Activated T-helper 1 cell treated with anti-CD3 and anti-CD28 coated beads, Interleukin-12 subunit alpha, Interleukin-12 subunit beta, Interleukin-2, Interleukin-4 antibody, amounts not matched to agents 30 ng/mL and 10 ng/mL and 1 ng/mL, durations not matched to agents 14 hours and 24 hours and 36 hours (primary cell): ENCODE measurements at regions of chrX and their contacts with region 1.

Region 1: DNA sequence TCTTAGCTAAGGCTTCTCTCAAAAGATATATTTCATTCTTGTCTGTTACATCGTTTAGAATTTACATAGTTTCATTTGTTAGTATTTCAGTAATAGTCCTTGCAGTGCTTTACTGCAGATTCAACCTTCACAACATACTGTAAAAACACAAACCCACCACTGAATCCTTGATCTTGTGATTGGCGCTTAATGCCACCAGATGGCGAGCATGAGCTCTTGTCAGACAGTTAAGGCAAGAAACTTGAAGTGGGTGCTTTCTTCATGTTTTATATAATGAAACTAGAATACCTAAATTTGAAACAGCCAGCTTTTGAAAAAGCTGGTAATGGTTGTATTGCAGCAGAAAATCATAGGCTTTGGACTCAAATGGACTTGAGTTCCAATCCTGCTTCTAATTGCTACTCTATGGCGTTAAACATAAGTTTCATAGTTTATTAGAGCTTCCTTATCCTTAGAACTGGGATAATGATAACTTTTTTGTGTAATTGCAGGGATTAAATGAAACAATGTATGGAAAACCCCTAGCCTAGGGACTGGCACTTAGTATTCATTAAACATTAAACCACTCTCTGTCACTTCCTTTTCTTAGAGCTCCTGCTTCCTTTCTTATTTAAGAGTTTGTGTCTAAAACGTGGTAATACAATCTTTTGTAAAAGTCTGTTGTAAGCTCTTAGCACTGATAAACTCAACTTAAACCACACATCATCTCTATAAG is 95.1 kb downstream of the USP9X start:
- DNase-seq: peak; percentile 11
- H3K4me3 Mint-ChIP-seq: peak overlapping the region; percentile 11
- H3K27ac Mint-ChIP-seq: peak overlapping the region; percentile 73
- H3K4me1 Mint-ChIP-seq: peaks cover 51% of the 10 kb centered on the region
- H3K27me3 Mint-ChIP-seq: no peaks in the 10 kb centered on the region

Region 2: DNA sequence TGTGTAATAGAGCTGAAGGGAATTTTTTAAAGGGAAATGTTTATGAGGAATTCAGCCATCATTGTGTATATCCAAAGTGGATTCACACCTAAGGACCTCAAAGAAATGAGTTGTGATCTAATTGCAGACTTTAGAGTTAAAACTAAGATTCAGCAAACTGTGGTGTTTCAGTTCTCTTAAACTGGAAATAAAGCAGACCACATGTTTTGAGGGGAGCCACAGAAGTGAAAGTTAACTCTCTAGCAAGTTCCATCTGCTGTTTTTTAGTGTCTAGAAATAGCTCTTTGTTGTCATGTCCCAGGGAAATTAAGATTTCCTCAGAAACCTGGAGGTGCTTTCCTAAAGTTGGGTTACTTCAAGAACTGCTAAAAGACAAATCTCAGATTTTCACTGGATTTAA is 56.3 kb after region 1 on chrX:
- intact Hi-C with region 1: loop called (anchors 5 kb)
- DNase-seq: no peak
- H3K4me3 Mint-ChIP-seq: no peak overlapping the region
- H3K27ac Mint-ChIP-seq: no peak overlapping the region
- H3K4me1 Mint-ChIP-seq: peaks cover 4% of the 10 kb centered on the region
- H3K27me3 Mint-ChIP-seq: peaks cover 2% of the 10 kb centered on the region

Region 3: GRCh38 chrX:41258226-41258625 is 77.9 kb after region 1 on chrX:
- intact Hi-C with region 1: loop called (anchors 1 kb)
- DNase-seq: no peak
- H3K4me3 Mint-ChIP-seq: no peak overlapping the region
- H3K27ac Mint-ChIP-seq: no peak overlapping the region
- H3K4me1 Mint-ChIP-seq: peaks cover 4% of the 10 kb centered on the region
- H3K27me3 Mint-ChIP-seq: peaks cover 6% of the 10 kb centered on the region

Region 4: GRCh38 chrX:41759817-41760216 is 579.5 kb after region 1 on chrX:
- intact Hi-C with region 1: loop called (anchors 5 kb)
- DNase-seq: no peak
- H3K4me3 Mint-ChIP-seq: no peak overlapping the region
- H3K27ac Mint-ChIP-seq: no peak overlapping the region
- H3K4me1 Mint-ChIP-seq: peaks cover 10% of the 10 kb centered on the region
- H3K27me3 Mint-ChIP-seq: no peaks in the 10 kb centered on the region